Sciatic nerve (tissue), 2 donors: ENCODE measurements at regions of chr2 and their contacts with region 1.

Region 1: DNA sequence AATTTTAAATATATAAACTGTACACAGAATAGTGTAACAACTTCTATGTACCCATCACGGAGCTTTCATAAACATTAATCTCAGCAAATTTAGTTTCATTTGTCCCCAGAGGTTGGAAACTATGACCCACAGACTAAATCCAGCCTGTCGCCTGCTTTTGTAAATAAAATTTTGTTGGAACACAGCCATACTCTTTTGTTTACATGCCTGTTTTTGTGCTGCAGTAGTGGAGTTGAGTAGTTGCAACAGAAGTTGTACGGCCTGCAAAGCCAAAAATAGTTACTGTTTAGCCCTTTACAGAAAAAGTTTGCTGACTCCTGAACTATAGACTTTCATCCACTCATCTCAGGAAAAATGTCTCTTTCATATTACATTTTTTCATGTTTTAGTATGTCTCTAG is 39.8 kb downstream of the RBM45 start:
- DNase-seq: no peak
- ATAC-seq: peak; percentile 26

Region 2: DNA sequence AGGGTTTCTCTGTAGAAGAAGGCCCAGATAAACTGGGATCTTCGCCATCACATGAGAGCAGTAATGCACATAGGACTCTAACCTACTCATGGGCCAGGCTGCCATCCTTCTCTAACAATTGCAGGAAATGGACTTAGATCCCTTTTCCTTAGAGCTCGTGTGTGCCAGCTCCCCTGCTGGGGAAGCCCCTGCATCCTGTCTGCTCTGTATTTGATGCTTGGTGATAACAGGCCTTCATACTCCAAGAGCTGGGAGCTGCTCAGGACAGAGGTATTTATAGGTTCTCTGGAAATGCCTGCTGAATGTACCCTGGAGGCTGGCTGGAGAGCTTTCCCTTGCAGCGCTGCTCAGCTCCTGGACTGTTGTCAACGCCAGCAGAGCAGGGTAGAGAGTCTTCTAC is 1633.2 kb before region 1 on chr2:
- intact Hi-C with region 1: no loop called
- DNase-seq: no peak
- ATAC-seq: peak; percentile 62

Region 3: DNA sequence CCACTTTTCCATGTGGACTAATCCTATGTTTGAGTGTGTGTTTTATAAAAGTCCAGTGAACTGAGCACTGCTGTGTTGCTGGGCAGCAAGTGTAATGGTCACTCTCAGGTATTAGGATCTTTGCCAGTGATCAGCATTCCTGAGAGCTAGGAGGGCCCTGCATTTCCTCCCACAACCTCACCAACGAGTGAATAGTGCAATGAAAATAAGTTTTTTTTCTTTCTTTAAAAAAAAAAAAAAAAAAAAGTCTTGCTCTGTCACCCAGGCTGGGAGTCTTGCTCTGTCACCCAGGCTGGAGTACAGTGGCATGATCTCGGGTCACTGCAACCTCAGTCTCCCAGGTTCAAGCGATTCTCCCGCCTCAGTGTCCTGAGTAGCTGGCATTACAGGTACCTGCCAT is 35.8 kb after region 1 on chr2:
- intact Hi-C with region 1: no loop called
- DNase-seq: no peak
- ATAC-seq: no peak

Region 4: DNA sequence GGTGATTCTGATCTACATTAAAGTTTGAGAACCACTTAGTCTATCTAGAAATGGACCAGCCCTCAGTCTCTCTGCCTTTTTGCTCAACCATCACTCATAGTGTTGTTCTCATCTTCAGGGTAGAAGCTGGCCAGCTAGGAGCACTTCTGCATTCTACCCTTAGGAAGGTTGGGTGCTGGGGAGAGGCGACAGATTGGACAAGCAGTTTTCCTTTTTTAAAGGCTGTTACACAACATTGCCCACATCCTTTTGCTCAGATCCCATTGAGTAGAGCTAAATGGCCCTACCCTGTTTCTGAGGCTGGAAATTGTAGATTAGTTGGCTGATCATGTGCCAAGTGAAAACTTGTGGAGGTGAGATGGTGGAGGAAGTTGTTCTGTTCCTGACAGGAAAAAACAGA is 77.9 kb after region 1 on chr2:
- intact Hi-C with region 1: loop called (anchors 2 kb)
- DNase-seq: no peak
- ATAC-seq: peak; percentile 57